ENCODE measurements at regions of chr21 and their contacts with region 1.

Region 1: GRCh38 chr21:33894736-33895288 is 20.8 kb downstream of the ATP5PO start:
- DNase-seq: peak; percentile 70
- ATAC-seq: peak; percentile 93
- H3K4me3 ChIP-seq: peak overlapping the region; percentile 33 to 73 (median 43)
- H3K27ac ChIP-seq: no peak overlapping the region
- H3K4me1 ChIP-seq: peaks cover 30% of the 10 kb centered on the region
- H3K27me3 ChIP-seq: peaks cover 0 to 24% of the 10 kb centered on the region in 2 experiments; a peak in 1 of 5 replicates
- CTCF ChIP-seq: peak; percentile 86
- EP300 ChIP-seq: no peak
- POLR2A ChIP-seq: no peak
- RAD21 ChIP-seq: peak; percentile 70

Region 2: DNA sequence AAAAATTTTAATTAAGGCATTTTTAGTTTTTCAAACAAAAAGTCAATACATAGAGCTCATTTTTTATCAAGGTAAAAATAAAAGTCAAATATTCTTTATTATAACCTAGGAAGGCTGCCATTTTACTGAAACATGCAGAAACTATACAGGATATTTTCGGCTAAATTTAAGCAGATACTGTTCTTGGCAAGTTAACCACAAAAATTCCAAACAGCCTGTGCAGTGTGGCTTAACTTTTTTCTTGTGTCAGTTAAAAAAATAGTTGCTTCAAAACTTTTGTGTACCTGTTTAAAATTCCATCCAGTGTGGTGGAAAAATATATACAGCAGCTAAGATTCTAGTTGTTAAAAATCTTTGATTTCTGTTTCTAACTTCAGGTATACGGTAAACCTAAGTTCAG is 114.2 kb before region 1 on chr21:
- CTCF ChIA-PET with region 1: no interaction called
- POLR2A ChIA-PET with region 1: no interaction called
- in situ Hi-C with region 1: no loop called
- intact Hi-C with region 1: no loop called
- DNase-seq: no peak
- ATAC-seq: no peak
- H3K4me3 ChIP-seq: no peak overlapping the region
- H3K27ac ChIP-seq: no peak overlapping the region
- H3K4me1 ChIP-seq: no peaks in the 10 kb centered on the region
- H3K27me3 ChIP-seq: no peaks in the 10 kb centered on the region
- CTCF ChIP-seq: no peak
- EP300 ChIP-seq: no peak
- POLR2A ChIP-seq: no peak
- RAD21 ChIP-seq: no peak

Region 3: DNA sequence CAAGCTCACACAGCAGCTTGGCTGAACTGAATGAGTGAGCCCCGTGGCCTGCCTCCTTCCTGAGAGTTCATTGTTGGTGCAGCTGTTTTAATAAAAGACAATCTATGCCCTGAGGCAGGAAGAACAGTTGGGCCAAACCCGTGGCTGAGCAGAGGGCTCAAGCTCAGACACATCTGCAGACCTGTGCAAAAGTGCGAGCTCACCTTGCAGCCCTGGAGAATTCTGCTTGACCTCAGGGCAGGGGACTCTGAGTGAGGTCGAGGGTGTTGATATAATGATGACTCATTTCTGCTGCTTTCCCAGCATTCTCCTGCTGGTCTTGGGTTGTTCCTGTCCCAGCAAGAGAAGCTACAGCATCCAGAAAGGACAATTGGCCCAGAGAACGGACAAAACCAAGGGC is 40.2 kb before region 1 on chr21:
- CTCF ChIA-PET with region 1: no interaction called
- POLR2A ChIA-PET with region 1: no interaction called
- in situ Hi-C with region 1: no loop called
- intact Hi-C with region 1: loop called (anchors 5 kb)
- DNase-seq: peak; percentile 34
- ATAC-seq: peak; percentile 55
- H3K4me3 ChIP-seq: no peak overlapping the region; a peak in 1 of 6 replicates
- H3K27ac ChIP-seq: no peak overlapping the region
- H3K4me1 ChIP-seq: peaks cover 27% of the 10 kb centered on the region
- H3K27me3 ChIP-seq: peaks cover 2 to 14% of the 10 kb centered on the region in 2 experiments; a peak in 4 of 5 replicates
- CTCF ChIP-seq: no peak
- EP300 ChIP-seq: no peak
- POLR2A ChIP-seq: no peak
- RAD21 ChIP-seq: no peak